GM12878 (cell line): ENCODE measurements at regions of chr13 and their contacts with region 1.

Region 1: GRCh38 chr13:31909864-31910551 is 121.6 kb upstream of the FRY start:
- DNase-seq: peak; percentile 37
- ATAC-seq: peak; percentile 73
- H3K4me3 ChIP-seq: no peak overlapping the region
- H3K27ac ChIP-seq: no peak overlapping the region
- H3K4me1 ChIP-seq: no peaks in the 10 kb centered on the region
- H3K27me3 ChIP-seq: no peaks in the 10 kb centered on the region; a peak in 2 of 4 replicates
- CTCF ChIP-seq: peak; percentile 73 to 86 (median 84)
- EP300 ChIP-seq: peak in 1 of 2 experiments; percentile 39; a peak in 1 of 4 replicates
- POLR2A ChIP-seq: no peak
- RAD21 ChIP-seq: peak; percentile 91

Region 2: DNA sequence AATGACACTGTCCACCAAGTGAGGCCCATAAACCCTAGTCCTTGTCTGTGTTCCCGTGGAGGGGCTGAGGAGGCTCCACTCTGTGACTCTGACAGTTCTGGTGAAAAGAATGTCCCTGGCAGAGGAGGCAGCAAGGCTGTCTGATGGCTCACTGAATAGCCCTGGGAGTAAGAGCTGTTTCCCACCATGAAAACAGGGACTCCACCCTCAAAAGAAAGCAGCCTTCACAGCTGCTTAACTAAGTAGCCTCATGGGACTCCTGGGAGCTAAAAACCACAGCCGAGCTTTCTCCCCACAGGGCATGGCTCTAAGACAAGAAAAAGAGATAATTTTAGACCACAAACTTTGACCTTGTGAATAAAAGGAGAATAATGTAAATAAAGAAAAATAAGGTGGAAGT is 13.6 kb before region 1 on chr13:
- CTCF ChIA-PET with region 1: interaction called, 49 read pairs
- POLR2A ChIA-PET with region 1: interaction called, 6 read pairs
- RAD21 ChIA-PET with region 1: interaction called, 19 read pairs
- SMC1A ChIA-PET with region 1: interaction called, 16 read pairs
- in situ Hi-C with region 1: no loop called
- intact Hi-C with region 1: no loop called
- DNase-seq: no peak
- ATAC-seq: peak; percentile 69
- H3K4me3 ChIP-seq: no peak overlapping the region
- H3K27ac ChIP-seq: no peak overlapping the region
- H3K4me1 ChIP-seq: peaks cover 7% of the 10 kb centered on the region; the same call in 1 of the 2 replicates
- H3K27me3 ChIP-seq: no peaks in the 10 kb centered on the region
- CTCF ChIP-seq: no peak
- EP300 ChIP-seq: peak; percentile 25 to 52; a peak in 1 of 4 replicates
- POLR2A ChIP-seq: no peak
- RAD21 ChIP-seq: no peak

Region 3: DNA sequence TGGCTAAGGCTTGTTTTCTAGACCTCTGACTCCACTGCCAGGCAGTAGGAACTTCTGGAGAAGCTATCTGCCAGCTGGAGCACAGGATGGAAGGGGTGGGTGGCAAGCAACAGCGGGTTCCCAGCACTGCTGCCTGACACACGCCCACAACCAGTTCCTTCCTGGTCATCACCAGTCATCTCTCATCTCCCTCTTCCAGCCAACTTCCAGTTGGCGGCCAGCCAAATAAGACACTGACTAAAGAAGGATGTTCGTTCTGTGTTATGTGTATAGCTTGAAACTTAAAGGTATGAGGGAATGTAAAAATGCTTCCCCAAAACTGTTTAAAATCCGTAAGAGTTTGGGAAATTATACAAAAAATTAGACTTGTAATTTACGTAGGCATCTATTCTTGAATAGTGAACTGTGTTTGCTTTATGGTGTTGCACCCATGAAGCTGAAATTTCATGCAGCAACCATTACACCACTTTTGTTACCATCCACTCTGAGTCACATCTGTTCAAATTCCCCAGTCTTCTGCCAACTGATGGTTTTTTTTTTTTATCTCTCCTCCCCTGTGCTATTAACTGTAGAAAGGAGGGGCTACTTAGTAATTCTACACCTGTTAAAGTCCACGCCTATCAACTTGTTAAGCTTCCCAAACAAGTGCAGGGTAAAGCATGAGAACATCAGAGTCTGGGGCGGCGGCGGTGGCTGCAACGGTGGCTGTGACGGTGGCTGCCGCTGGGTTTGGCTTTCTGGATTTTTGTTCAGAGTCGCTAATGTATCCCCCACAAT is 35.4 kb after region 1 on chr13:
- CTCF ChIA-PET with region 1: interaction called, 19 read pairs
- POLR2A ChIA-PET with region 1: no interaction called
- RAD21 ChIA-PET with region 1: interaction called, 26 read pairs
- SMC1A ChIA-PET with region 1: interaction called, 10 read pairs
- in situ Hi-C with region 1: no loop called
- intact Hi-C with region 1: no loop called
- DNase-seq: no peak
- ATAC-seq: no peak
- H3K4me3 ChIP-seq: no peak overlapping the region
- H3K27ac ChIP-seq: no peak overlapping the region
- H3K4me1 ChIP-seq: peaks cover 9% of the 10 kb centered on the region
- H3K27me3 ChIP-seq: no peaks in the 10 kb centered on the region
- CTCF ChIP-seq: no peak
- EP300 ChIP-seq: no peak
- POLR2A ChIP-seq: no peak
- RAD21 ChIP-seq: no peak

Region 4: GRCh38 chr13:32001185-32001768 is 91.3 kb after region 1 on chr13:
- CTCF ChIA-PET with region 1: interaction called, 15 read pairs
- POLR2A ChIA-PET with region 1: no interaction called
- RAD21 ChIA-PET with region 1: interaction called, 19 read pairs
- SMC1A ChIA-PET with region 1: interaction called, 13 read pairs
- in situ Hi-C with region 1: no loop called
- intact Hi-C with region 1: loop called (anchors 1 kb)
- DNase-seq: no peak
- ATAC-seq: peak; percentile 98
- H3K4me3 ChIP-seq: no peak overlapping the region
- H3K27ac ChIP-seq: no peak overlapping the region
- H3K4me1 ChIP-seq: no peaks in the 10 kb centered on the region
- H3K27me3 ChIP-seq: no peaks in the 10 kb centered on the region
- CTCF ChIP-seq: peak; percentile 58 to 72 (median 61)
- EP300 ChIP-seq: no peak
- POLR2A ChIP-seq: no peak
- RAD21 ChIP-seq: peak; percentile 63

Region 5: GRCh38 chr13:32164622-32165268 is 254.7 kb after region 1 on chr13:
- CTCF ChIA-PET with region 1: interaction called, 26 read pairs
- POLR2A ChIA-PET with region 1: no interaction called
- RAD21 ChIA-PET with region 1: interaction called, 12 read pairs
- SMC1A ChIA-PET with region 1: interaction called, 12 read pairs
- in situ Hi-C with region 1: no loop called
- intact Hi-C with region 1: no loop called
- DNase-seq: peak; percentile 11
- ATAC-seq: peak; percentile 82
- H3K4me3 ChIP-seq: no peak overlapping the region
- H3K27ac ChIP-seq: no peak overlapping the region
- H3K4me1 ChIP-seq: peaks cover 3% of the 10 kb centered on the region; the same call in 1 of the 2 replicates
- H3K27me3 ChIP-seq: no peaks in the 10 kb centered on the region
- CTCF ChIP-seq: peak; percentile 19 to 56 (median 41); a peak in 4 of 6 replicates
- EP300 ChIP-seq: no peak
- POLR2A ChIP-seq: no peak
- RAD21 ChIP-seq: peak; percentile 41; the same call in 1 of the 2 replicates

Region 6: DNA sequence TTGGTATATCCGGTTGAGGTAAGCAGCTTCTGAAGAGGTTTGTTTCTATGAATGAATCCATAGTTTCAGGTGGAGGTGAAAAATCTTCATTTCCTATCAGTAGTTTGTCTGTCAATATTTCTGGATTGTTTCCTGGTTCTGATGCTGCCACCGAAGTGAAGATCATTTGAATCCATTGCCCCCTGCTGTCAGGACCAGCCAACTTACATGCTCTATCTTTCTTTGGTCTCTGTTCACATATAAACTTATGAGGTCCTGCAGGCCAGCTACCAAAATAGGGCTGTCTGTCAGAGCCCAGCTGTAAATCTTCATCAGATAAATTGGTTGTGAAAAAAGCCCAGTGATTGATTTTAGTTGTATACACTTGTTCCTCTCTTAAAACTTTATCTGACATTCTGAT is 533.1 kb after region 1 on chr13:
- CTCF ChIA-PET with region 1: interaction called, 7 read pairs
- POLR2A ChIA-PET with region 1: no interaction called
- RAD21 ChIA-PET with region 1: interaction called, 10 read pairs
- SMC1A ChIA-PET with region 1: interaction called, 3 read pairs
- in situ Hi-C with region 1: no loop called
- intact Hi-C with region 1: no loop called
- DNase-seq: peak; percentile 60
- ATAC-seq: peak; percentile 93
- H3K4me3 ChIP-seq: no peak overlapping the region
- H3K27ac ChIP-seq: peak overlapping the region; percentile 62
- H3K4me1 ChIP-seq: peaks cover 15% of the 10 kb centered on the region
- H3K27me3 ChIP-seq: no peaks in the 10 kb centered on the region
- CTCF ChIP-seq: peak; percentile 55 to 62 (median 57); a peak in 5 of 6 replicates
- EP300 ChIP-seq: no peak
- POLR2A ChIP-seq: no peak
- RAD21 ChIP-seq: peak; percentile 67